ENCODE measurements at regions of chr3 and their contacts with region 1.

Region 1: GRCh38 chr3:111717601-111718000 is 122.5 kb upstream of the ZBED2 start:
- DNase-seq: peak; percentile 27 to 83 (median 69)
- ATAC-seq: peak; percentile 90
- H3K4me3 ChIP-seq: no peak overlapping the region
- H3K4me3 Mint-ChIP-seq: no peak overlapping the region
- H3K27ac ChIP-seq: no peak overlapping the region
- H3K27ac Mint-ChIP-seq: no peak overlapping the region
- H3K4me1 ChIP-seq: no peaks in the 10 kb centered on the region
- H3K4me1 Mint-ChIP-seq: peaks cover 3% of the 10 kb centered on the region
- H3K27me3 ChIP-seq: no peaks in the 10 kb centered on the region
- H3K27me3 Mint-ChIP-seq: no peaks in the 10 kb centered on the region
- CTCF ChIP-seq: peak; percentile 77

Region 2: DNA sequence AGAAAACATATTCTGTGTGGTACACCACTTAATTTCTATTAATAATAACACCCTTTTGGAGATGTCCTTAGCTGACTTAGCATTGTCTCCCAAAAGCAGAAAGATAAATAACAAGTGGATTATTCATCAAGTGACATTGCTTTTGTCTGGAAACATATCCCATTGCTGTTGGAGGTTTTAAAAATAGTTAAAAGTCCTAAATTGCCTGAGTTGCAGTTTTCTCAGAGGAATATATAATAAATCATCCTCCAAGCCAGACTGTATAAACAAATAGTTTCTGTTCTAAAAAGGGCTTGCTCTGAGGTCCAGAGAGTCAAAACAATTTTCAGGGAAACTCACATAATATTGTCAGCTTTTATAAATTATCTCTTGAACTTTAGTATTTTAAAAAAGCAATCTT is 236.1 kb before region 1 on chr3:
- CTCF ChIA-PET with region 1: no interaction called
- POLR2A ChIA-PET with region 1: no interaction called
- intact Hi-C with region 1: no loop called
- DNase-seq: no peak
- ATAC-seq: no peak
- H3K4me3 ChIP-seq: no peak overlapping the region
- H3K4me3 Mint-ChIP-seq: no peak overlapping the region
- H3K27ac ChIP-seq: no peak overlapping the region
- H3K27ac Mint-ChIP-seq: no peak overlapping the region
- H3K4me1 ChIP-seq: no peaks in the 10 kb centered on the region
- H3K4me1 Mint-ChIP-seq: no peaks in the 10 kb centered on the region
- H3K27me3 ChIP-seq: no peaks in the 10 kb centered on the region
- H3K27me3 Mint-ChIP-seq: peaks cover 3% of the 10 kb centered on the region
- CTCF ChIP-seq: no peak

Region 3: DNA sequence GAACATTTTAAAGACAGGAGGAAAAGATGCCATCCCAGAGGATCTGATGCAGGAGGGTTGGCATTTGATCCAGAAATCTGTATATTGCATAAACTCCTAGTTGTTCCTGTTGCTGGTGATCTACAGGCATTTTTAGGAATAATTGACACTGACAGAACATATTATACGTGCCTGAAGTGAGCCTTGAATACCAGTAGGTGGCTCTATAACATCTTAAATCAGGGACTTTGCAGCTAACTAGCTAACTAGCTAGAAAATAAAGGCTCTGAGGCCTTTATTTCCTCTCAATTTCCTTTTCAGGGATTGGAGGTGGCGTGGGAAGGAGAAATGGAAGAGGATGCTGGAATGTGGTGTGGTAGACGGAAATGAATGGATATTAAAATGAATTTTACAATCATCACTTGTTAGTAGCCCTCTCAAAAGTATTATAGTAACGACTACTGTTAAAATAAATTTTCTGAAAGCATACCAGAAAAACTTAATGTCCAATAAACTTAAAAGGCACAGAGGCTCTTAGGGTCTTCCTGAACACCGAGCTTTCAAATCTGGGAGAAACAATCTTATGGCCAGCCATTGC is 48.6 kb before region 1 on chr3:
- CTCF ChIA-PET with region 1: interaction called, 6 read pairs
- POLR2A ChIA-PET with region 1: no interaction called
- intact Hi-C with region 1: loop called (anchors 1 kb)
- DNase-seq: peak in 2 of 9 experiments; percentile 59 to 75
- ATAC-seq: peak; percentile 36
- H3K4me3 ChIP-seq: no peak overlapping the region
- H3K4me3 Mint-ChIP-seq: peak overlapping the region; percentile 16
- H3K27ac ChIP-seq: peak overlapping the region in 1 of 2 experiments; percentile 89
- H3K27ac Mint-ChIP-seq: peak overlapping the region; percentile 70
- H3K4me1 ChIP-seq: peaks cover 54% of the 10 kb centered on the region
- H3K4me1 Mint-ChIP-seq: peaks cover 78% of the 10 kb centered on the region
- H3K27me3 ChIP-seq: no peaks in the 10 kb centered on the region
- H3K27me3 Mint-ChIP-seq: no peaks in the 10 kb centered on the region
- CTCF ChIP-seq: peak; percentile 88

Region 4: DNA sequence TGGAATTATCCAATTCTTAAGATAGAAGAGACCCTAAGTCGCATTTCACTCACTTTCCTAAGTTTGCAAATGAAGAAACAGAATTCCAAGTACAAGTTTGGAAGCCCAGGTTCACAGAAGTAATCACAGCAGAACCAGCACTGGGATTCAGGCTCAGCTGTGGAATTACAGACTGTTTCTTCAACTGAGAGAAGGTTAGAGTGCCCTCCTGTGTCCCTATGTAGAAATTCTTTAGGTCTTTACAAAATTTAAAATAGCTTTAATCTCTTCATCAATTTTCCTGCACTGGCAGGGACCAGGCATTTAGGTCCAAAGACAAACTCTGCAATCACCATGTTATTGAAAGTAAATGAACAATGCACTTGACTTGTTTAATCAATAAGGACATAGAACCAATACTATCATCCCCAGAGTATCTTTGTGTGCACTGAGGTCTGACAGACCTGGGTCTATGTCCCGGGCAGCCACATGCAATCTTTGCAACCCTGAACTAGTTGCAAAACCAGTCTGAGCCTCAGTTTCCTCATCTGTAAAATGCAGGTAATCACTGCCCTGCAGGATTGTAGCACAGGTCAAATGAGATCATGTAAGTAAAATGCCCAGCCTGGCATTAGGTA is 26.2 kb before region 1 on chr3:
- CTCF ChIA-PET with region 1: interaction called, 47 read pairs
- POLR2A ChIA-PET with region 1: no interaction called
- intact Hi-C with region 1: loop called in 1 of 2 experiments (anchors 2 kb)
- DNase-seq: peak in 2 of 9 experiments; percentile 54 to 71
- ATAC-seq: peak; percentile 68
- H3K4me3 ChIP-seq: no peak overlapping the region
- H3K4me3 Mint-ChIP-seq: no peak overlapping the region
- H3K27ac ChIP-seq: no peak overlapping the region
- H3K27ac Mint-ChIP-seq: no peak overlapping the region
- H3K4me1 ChIP-seq: peaks cover 5% of the 10 kb centered on the region
- H3K4me1 Mint-ChIP-seq: peaks cover 68% of the 10 kb centered on the region
- H3K27me3 ChIP-seq: no peaks in the 10 kb centered on the region
- H3K27me3 Mint-ChIP-seq: no peaks in the 10 kb centered on the region
- CTCF ChIP-seq: peak; percentile 65

Region 5: GRCh38 chr3:111729087-111729846 is 11.7 kb after region 1 on chr3:
- CTCF ChIA-PET with region 1: interaction called, 14 read pairs
- POLR2A ChIA-PET with region 1: no interaction called
- intact Hi-C with region 1: loop called in 1 of 2 experiments (anchors 1 kb)
- DNase-seq: no peak
- ATAC-seq: no peak
- H3K4me3 ChIP-seq: no peak overlapping the region
- H3K4me3 Mint-ChIP-seq: no peak overlapping the region
- H3K27ac ChIP-seq: no peak overlapping the region
- H3K27ac Mint-ChIP-seq: no peak overlapping the region
- H3K4me1 ChIP-seq: no peaks in the 10 kb centered on the region
- H3K4me1 Mint-ChIP-seq: no peaks in the 10 kb centered on the region
- H3K27me3 ChIP-seq: no peaks in the 10 kb centered on the region
- H3K27me3 Mint-ChIP-seq: no peaks in the 10 kb centered on the region
- CTCF ChIP-seq: no peak

Region 6: DNA sequence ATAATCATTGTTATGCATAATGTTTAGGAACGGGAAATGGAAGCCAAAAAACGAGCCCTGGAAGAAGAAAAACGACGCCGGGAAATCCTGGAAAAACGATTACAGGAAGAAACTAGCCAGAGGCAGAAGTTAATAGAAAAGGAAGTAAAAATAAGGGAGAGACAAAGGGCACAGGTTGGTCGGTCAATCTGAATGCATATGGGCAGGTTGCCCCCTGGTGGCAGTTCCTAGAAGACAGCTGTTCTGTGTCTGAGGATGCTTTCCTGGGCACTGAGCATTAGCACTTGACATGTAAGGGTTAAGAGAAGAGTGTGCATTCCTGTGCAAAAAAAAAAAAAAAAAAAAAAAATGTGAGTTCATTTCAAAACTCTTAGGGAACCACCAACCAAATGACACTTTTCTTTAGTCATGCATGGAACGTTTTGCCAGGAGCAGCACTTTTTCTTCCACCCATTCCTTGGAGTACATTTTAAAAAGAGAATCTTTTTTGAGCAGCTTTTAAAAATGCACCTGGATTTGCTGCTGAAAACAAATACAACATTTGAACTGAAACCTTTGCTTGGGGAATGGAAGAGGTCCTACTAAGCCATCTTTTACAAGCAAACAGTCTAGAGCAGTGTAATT is 250.2 kb after region 1 on chr3:
- CTCF ChIA-PET with region 1: interaction called, 379 read pairs
- POLR2A ChIA-PET with region 1: interaction called, 4 read pairs
- intact Hi-C with region 1: loop called (anchors 1 kb)
- DNase-seq: peak; percentile 55 to 85 (median 80)
- ATAC-seq: peak; percentile 95
- H3K4me3 ChIP-seq: no peak overlapping the region
- H3K4me3 Mint-ChIP-seq: no peak overlapping the region
- H3K27ac ChIP-seq: no peak overlapping the region
- H3K27ac Mint-ChIP-seq: no peak overlapping the region
- H3K4me1 ChIP-seq: no peaks in the 10 kb centered on the region
- H3K4me1 Mint-ChIP-seq: peaks cover 3% of the 10 kb centered on the region
- H3K27me3 ChIP-seq: no peaks in the 10 kb centered on the region
- H3K27me3 Mint-ChIP-seq: no peaks in the 10 kb centered on the region
- CTCF ChIP-seq: peak; percentile 92

Region 7: GRCh38 chr3:111989061-111989678 is 271.6 kb after region 1 on chr3:
- CTCF ChIA-PET with region 1: interaction called, 22 read pairs
- POLR2A ChIA-PET with region 1: no interaction called
- intact Hi-C with region 1: no loop called
- DNase-seq: peak in 2 of 9 experiments; percentile 53 to 64
- ATAC-seq: peak; percentile 72
- H3K4me3 ChIP-seq: no peak overlapping the region
- H3K4me3 Mint-ChIP-seq: peak overlapping the region; percentile 38
- H3K27ac ChIP-seq: no peak overlapping the region
- H3K27ac Mint-ChIP-seq: no peak overlapping the region
- H3K4me1 ChIP-seq: peaks cover 3% of the 10 kb centered on the region
- H3K4me1 Mint-ChIP-seq: peaks cover 39% of the 10 kb centered on the region
- H3K27me3 ChIP-seq: no peaks in the 10 kb centered on the region
- H3K27me3 Mint-ChIP-seq: no peaks in the 10 kb centered on the region
- CTCF ChIP-seq: peak; percentile 61

Region 8: DNA sequence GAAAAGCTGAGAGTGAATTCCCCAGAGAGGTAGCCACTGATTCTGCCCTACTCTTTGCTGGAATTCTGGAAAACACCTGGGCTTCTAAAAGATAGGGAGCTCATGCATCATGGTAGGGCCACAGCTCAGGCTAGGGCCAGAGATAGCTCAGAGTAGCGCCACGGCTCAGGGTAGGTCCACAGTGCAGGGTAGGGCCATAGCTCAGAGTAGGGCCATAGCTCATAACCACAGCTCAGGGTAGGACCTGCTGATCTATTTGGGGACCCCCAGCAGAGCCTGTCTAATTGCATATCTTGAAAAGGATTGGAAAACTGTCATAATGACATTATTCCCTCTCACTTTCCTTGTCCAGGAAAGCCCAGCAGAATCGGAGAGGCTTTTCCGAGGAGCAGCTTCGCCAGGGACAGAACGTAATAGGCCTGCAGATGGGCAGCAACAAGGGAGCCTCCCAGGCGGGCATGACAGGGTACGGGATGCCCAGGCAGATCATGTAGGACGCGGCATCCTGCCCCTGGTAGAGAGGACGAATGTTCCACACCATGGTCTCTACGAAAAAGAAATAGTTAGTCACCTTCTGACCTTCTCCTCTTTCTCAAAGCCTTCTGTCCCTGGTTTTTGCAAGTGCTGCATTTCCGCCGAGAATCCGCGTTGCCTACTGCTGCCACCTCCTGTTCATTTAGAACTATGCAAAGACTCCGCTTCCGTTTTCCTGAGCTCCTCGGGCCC is 295.6 kb after region 1 on chr3:
- CTCF ChIA-PET with region 1: interaction called, 144 read pairs
- POLR2A ChIA-PET with region 1: interaction called, 3 read pairs
- intact Hi-C with region 1: loop called (anchors 1 kb)
- DNase-seq: peak; percentile 9 to 72 (median 51)
- ATAC-seq: peak; percentile 79
- H3K4me3 ChIP-seq: no peak overlapping the region
- H3K4me3 Mint-ChIP-seq: no peak overlapping the region
- H3K27ac ChIP-seq: no peak overlapping the region
- H3K27ac Mint-ChIP-seq: no peak overlapping the region
- H3K4me1 ChIP-seq: peaks cover 2% of the 10 kb centered on the region
- H3K4me1 Mint-ChIP-seq: peaks cover 6% of the 10 kb centered on the region
- H3K27me3 ChIP-seq: no peaks in the 10 kb centered on the region
- H3K27me3 Mint-ChIP-seq: no peaks in the 10 kb centered on the region
- CTCF ChIP-seq: peak; percentile 69

Region 9: DNA sequence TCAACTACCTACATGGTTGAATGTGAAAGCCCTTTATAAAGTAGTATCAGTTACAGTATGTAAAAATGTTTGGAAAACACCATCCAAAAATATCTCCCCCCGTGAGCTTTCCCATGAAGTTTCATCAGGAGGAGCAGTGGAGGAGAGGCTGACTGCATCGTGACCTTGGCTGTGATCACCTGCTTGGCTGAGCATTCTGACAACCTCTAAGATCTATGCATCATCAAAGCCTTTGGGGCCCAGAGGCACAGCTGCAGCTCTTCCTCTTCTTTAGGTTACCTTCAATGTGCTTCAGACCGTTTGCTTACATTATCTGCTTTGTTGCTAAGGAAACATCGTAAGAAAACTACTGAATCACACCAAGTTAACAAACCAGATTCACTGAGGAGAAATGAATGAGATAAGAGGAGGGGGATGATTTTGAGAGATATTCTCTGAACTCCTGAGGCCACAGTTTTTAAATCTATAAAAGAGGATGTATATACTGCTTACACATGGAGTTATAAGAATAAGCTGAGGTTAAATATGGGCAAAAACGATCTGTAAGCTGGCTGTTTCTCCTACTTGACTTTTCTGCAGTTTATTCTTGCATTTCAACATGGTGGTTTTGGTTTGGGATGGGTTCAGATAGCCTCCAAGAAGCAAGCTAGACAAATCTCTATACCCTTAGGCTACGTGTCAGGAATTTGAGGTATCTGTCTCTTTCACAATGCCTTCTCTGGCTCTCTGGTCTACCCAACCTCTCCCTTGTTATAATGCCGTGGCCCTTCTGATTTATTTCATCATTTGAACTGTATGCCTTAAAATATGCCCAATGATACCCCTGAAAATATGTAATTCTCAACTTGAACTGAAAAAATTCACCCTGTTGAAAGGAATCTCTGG is 411.5 kb after region 1 on chr3:
- CTCF ChIA-PET with region 1: no interaction called
- POLR2A ChIA-PET with region 1: no interaction called
- intact Hi-C with region 1: no loop called
- DNase-seq: peak; percentile 17 to 88 (median 52)
- ATAC-seq: peak; percentile 68
- H3K4me3 ChIP-seq: no peak overlapping the region
- H3K4me3 Mint-ChIP-seq: peak overlapping the region; percentile 4
- H3K27ac ChIP-seq: peak overlapping the region; percentile 55 to 82
- H3K27ac Mint-ChIP-seq: peak overlapping the region; percentile 83
- H3K4me1 ChIP-seq: peaks cover 75% of the 10 kb centered on the region
- H3K4me1 Mint-ChIP-seq: peaks cover 89% of the 10 kb centered on the region
- H3K27me3 ChIP-seq: no peaks in the 10 kb centered on the region
- H3K27me3 Mint-ChIP-seq: no peaks in the 10 kb centered on the region
- CTCF ChIP-seq: no peak

Region 10: GRCh38 chr3:112794622-112795172 is 1077.1 kb after region 1 on chr3:
- CTCF ChIA-PET with region 1: no interaction called
- POLR2A ChIA-PET with region 1: no interaction called
- intact Hi-C with region 1: no loop called
- DNase-seq: peak in 1 of 9 experiments; percentile 6
- ATAC-seq: no peak
- H3K4me3 ChIP-seq: no peak overlapping the region
- H3K4me3 Mint-ChIP-seq: no peak overlapping the region
- H3K27ac ChIP-seq: no peak overlapping the region
- H3K27ac Mint-ChIP-seq: peak overlapping the region; percentile 35
- H3K4me1 ChIP-seq: peaks cover 4% of the 10 kb centered on the region
- H3K4me1 Mint-ChIP-seq: peaks cover 19% of the 10 kb centered on the region
- H3K27me3 ChIP-seq: no peaks in the 10 kb centered on the region
- H3K27me3 Mint-ChIP-seq: no peaks in the 10 kb centered on the region
- CTCF ChIP-seq: no peak

Measured in CD8-positive, alpha-beta T cell (primary cell).